ENCODE measurements at regions of chr6 and their contacts with region 1.

Region 1: GRCh38 chr6:107674995-107675738 is 148.9 kb downstream of the SCML4 start:
- DNase-seq: peak; percentile 64 to 78
- H3K4me3 ChIP-seq: peak overlapping the region; percentile 55; the same call in 1 of the 2 replicates
- H3K27ac ChIP-seq: no peak overlapping the region
- H3K4me1 ChIP-seq: no peaks in the 10 kb centered on the region; the same call in 1 of the 2 replicates
- H3K27me3 ChIP-seq: no peaks in the 10 kb centered on the region
- CTCF ChIP-seq: peak; percentile 97

Region 2: DNA sequence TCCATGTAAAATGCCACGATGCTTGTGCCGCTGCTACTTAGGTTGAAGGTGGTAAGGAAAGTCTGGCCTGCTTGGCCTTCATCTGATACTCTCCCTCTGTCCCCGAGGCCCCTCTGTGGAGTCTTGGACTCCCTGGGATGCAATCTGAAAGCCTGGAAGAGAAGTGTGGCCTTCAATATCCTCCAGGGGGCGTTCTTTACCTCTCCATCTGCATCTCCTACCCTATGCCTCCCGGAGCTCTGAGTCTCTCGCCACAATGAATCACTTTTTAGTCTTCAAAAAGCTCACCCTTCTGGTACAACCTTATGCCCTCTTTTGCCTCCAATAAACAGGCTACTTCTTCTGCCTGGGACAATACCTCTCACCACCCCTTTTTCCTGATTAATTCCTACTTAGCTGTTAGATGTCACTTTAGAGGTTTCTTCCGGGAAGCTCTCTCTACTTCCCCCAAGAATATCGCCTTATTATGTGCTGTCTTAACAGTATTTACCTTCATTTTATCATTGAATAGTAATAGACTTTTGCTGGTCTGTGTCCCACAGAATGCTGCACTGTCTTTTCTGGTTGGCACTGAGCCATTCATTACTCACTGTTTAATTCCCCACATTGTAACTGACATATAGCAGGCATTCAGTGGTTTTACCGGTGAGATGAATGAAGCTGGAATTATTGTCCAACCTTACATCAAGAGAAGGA is 1335.7 kb before region 1 on chr6:
- CTCF ChIA-PET with region 1: no interaction called
- POLR2A ChIA-PET with region 1: no interaction called
- intact Hi-C with region 1: loop called (anchors 10 kb)
- DNase-seq: peak; percentile 65 to 75
- H3K4me3 ChIP-seq: no peak overlapping the region
- H3K27ac ChIP-seq: peak overlapping the region; percentile 18; the same call in 1 of the 2 replicates
- H3K4me1 ChIP-seq: peaks cover 9% of the 10 kb centered on the region
- H3K27me3 ChIP-seq: no peaks in the 10 kb centered on the region
- CTCF ChIP-seq: peak; percentile 90

Region 3: DNA sequence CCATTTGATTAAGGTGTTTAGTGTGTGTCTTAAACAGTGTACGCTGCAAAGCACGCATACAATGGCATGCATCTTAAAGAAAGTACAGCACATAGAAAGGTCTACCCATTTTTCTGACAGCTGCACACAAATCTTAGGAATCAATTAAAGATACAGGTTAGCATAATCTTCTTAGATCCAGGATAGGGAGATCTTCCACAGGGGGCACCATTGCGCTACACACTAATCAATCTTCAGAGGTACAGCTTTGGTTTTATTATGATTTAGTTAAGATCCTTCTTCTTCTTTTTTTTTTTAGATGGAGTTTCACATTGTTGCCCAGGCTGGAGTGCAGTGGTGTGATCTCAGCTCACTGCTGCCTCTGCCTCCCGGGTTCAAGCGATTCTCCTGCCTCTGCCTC is 496.2 kb before region 1 on chr6:
- CTCF ChIA-PET with region 1: no interaction called
- POLR2A ChIA-PET with region 1: no interaction called
- intact Hi-C with region 1: loop called (anchors 2 kb)
- DNase-seq: no peak
- H3K4me3 ChIP-seq: no peak overlapping the region
- H3K27ac ChIP-seq: no peak overlapping the region
- H3K4me1 ChIP-seq: no peaks in the 10 kb centered on the region
- H3K27me3 ChIP-seq: no peaks in the 10 kb centered on the region
- CTCF ChIP-seq: peak; percentile 54

Region 4: DNA sequence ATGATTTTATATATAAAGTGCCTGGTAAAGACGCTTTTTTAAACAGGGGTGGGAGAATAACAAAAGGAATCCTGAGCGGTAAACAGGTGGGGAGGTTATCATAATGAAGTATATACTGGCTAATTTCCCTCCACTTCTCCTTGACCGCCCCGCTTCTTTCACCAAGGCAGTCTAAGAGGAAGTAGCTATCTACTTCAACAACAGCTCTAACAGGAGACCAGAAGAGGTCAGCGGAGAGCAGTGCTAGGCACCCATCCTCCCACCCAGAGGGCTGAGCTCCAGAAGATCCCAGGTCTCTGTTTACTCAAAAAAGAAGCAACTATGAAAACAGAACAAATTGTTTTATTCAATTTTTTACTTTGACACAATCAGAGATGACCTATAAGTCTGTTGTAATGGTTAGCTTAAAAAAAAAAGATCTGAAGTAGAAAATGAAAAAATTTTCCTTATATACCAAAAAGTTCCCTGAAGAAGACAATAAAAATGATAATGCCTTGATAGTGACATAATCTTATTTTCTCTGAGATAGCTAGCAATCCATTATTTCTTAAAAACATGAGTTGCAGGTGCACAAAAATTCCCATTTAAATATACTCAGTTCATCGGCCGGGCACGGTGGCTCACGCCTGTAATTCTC is 356.9 kb before region 1 on chr6:
- CTCF ChIA-PET with region 1: interaction called, 13 read pairs
- POLR2A ChIA-PET with region 1: no interaction called
- intact Hi-C with region 1: loop called (anchors 1 kb)
- DNase-seq: peak in 1 of 2 experiments; percentile 37
- H3K4me3 ChIP-seq: no peak overlapping the region
- H3K27ac ChIP-seq: no peak overlapping the region
- H3K4me1 ChIP-seq: no peaks in the 10 kb centered on the region
- H3K27me3 ChIP-seq: no peaks in the 10 kb centered on the region
- CTCF ChIP-seq: peak; percentile 76

Region 5: GRCh38 chr6:107489636-107490565 is 185.3 kb before region 1 on chr6 and contains the start of gene SOBP:
- CTCF ChIA-PET with region 1: no interaction called
- POLR2A ChIA-PET with region 1: no interaction called
- intact Hi-C with region 1: loop called (anchors 1 kb)
- DNase-seq: peak in 1 of 2 experiments; percentile 12
- H3K4me3 ChIP-seq: peak within 1 kb of the TSS; percentile 58
- H3K27ac ChIP-seq: no peak within 1 kb of the TSS
- H3K4me1 ChIP-seq: peaks cover 5% of the 10 kb centered on the region; the same call in 1 of the 2 replicates
- H3K27me3 ChIP-seq: peaks cover 35% of the 10 kb centered on the region
- CTCF ChIP-seq: no peak
- total RNA-seq, gene SOBP: 0.22 TPM in 1 of 2 replicates, not detected in the other

Region 6: DNA sequence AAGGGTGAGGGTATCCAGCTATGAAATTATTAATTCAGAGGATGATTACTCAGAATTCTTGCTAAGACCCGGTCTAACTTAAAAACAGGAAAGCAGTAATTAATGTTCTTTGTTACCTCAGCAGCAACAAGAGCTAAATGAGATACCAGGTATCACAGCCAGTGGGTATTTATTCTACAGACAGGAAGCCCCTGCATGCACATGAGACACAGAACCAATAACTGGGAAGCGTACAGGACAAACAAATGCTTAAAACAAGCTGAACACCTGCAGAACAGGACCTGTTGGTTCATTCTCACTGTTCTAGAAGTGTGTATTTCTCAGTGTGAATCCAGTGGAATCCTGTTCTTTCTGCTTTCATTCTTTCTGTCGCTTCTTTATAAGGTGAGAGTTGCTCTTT is 118.0 kb after region 1 on chr6:
- CTCF ChIA-PET with region 1: no interaction called
- POLR2A ChIA-PET with region 1: no interaction called
- intact Hi-C with region 1: no loop called
- DNase-seq: no peak
- H3K4me3 ChIP-seq: no peak overlapping the region
- H3K27ac ChIP-seq: no peak overlapping the region
- H3K4me1 ChIP-seq: no peaks in the 10 kb centered on the region
- H3K27me3 ChIP-seq: peaks cover 59% of the 10 kb centered on the region
- CTCF ChIP-seq: no peak

Region 7: DNA sequence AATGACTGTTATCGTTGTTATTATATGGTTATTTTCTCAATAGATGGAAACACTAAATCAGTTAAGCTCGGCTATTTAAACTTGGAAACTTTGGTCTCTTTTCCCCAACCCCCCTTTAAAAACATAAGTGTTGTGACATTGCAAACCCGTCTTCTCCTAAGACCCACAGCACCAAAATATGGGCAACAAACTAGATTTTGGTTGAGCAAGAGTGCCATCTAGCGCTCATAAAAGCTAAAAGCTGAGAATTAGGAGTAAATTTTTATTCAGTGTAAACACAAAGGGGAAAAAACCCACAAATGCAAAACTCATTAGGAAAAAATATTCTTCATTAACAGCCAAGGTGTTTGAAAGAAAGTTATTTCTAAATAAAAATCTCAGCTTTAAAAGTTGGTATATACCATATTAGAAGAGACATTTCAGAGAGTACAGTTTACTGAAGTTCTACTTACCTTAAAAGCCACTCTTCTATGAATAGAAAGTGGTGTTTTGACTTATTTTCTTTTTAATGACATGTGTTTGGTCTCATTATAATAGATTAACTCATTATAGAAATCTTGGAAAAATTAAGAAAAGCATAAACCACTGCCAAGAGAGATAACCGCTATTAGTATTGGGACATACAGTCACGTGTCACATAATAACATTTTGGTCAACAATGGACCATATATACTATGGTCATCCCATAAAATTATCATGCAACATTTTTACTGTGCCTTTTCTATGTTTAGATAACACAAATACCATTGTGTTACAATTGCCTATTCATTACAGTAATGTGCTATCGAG is 1398.4 kb after region 1 on chr6:
- CTCF ChIA-PET with region 1: no interaction called
- POLR2A ChIA-PET with region 1: no interaction called
- intact Hi-C with region 1: loop called (anchors 5 kb)
- DNase-seq: peak; percentile 30 to 68
- H3K4me3 ChIP-seq: no peak overlapping the region
- H3K27ac ChIP-seq: no peak overlapping the region
- H3K4me1 ChIP-seq: no peaks in the 10 kb centered on the region; the same call in 1 of the 2 replicates
- H3K27me3 ChIP-seq: no peaks in the 10 kb centered on the region
- CTCF ChIP-seq: peak; percentile 87

Region 8: DNA sequence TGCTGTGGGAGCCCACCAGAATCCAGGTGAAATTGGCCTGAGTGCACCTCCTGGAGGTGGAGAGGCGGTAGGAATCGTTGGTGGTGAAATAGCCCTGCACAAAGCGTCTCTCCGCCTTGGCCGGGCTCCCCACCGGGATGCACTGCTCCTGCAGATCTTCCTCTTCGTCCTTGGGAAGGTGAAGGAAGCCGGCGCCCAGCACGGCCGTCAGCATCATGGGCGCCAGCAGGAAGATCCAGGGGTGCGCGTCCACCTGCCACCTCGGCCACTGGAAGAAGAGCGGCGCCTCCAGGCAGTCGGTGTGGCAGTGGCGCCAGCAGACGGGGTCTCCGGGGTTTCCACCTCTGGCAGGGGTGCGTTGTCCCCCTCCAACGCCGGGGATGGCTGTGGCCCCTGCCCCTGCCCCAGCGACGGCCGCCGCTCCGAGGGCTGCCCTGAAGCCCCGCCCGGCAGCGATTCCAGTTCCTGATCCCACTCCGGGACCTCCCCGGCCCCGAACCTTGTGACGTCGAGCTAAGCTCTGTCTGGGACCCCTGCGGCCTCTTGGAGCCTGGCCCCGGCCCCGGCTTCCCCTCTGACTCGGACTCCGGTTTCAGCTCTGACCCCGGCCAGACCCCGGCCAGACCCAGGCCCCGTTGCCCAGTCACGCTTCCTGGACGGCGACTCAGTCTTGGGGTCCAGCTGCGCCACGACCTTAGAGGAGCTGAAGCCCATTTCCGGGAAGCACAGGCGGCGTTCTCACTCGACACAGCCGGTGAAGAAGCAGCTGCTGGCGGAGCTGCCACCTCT is 1615.2 kb after region 1 on chr6:
- CTCF ChIA-PET with region 1: no interaction called
- POLR2A ChIA-PET with region 1: no interaction called
- intact Hi-C with region 1: no loop called
- DNase-seq: no peak
- H3K4me3 ChIP-seq: no peak overlapping the region
- H3K27ac ChIP-seq: no peak overlapping the region
- H3K4me1 ChIP-seq: peaks cover 31% of the 10 kb centered on the region
- H3K27me3 ChIP-seq: no peaks in the 10 kb centered on the region
- CTCF ChIP-seq: no peak

Measured in PC-9 (cell line).